Sciatic nerve (tissue), 2 donors: ENCODE measurements at regions of chr1 and their contacts with region 1.

Region 1: GRCh38 chr1:85307987-85308832 is 31.8 kb upstream of the BCL10 start:
- DNase-seq: peak; percentile 92
- ATAC-seq: peak; percentile 97

Region 2: DNA sequence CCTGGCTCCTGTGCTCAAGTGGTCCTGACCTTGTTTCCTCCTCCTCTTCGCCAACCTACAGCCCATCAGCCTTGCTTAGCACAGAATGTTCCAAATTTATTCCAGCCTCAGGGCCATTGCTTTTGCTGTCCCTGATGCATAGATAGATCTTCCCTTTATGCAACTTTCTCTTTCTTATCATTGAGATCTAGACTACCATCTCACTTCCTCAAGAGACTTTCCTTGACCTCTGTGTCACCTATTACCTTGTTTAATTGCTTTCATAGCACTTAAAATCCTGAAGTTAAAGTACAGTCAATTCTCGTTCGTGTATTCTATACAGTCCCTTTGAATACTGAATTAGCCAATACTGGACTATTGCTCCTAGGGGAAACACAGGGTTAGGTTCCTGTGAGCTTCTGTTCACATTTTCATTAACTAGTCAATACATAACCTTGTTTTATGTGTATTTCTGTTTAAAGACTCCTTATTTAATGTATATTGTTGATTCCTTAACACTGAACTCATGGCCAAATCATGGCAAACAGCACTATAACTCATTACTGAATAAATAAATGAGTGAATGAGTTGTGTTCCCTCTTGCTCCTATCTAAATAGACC is 233.7 kb before region 1 on chr1:
- intact Hi-C with region 1: no loop called
- DNase-seq: no peak
- ATAC-seq: no peak

Region 3: DNA sequence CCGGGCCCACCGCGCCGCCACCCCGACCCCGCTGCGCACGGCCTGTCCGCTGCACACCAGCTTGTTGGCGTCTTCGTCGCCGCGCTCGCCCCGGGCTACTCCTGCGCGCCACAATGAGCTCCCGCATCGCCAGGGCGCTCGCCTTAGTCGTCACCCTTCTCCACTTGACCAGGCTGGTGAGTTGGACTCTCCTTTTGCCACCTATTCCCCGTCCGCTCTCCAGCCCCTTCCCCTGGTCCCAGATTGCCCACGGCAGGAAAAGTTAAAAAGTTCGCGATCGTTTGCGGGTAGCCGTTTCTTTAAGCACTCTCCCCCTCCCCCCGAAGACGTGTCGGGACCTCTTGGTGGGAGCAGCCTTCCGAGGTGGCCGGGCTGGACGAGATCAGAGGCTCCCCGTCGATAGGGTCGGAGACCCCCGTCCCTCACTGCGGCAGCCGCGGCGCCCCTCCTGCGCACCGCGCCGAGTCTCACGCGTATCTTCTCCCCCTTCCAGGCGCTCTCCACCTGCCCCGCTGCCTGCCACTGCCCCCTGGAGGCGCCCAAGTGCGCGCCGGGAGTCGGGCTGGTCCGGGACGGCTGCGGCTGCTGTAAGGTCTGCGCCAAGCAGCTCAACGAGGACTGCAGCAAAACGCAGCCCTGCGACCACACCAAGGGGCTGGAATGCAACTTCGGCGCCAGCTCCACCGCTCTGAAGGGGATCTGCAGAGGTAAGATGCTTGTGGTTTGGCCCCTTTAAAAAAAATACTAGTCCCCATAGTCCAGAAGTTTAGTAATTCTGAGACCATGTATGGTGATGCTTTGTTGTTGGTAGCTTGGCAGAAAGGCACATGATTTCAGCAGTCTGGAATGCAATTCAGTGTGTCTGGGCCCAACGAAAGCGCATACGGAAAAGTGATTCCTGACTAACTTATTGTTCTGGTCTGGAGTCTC is 272.9 kb after region 1 on chr1:
- intact Hi-C with region 1: loop called (anchors 10 kb)
- DNase-seq: peak; percentile 87
- ATAC-seq: peak; percentile 60

Region 4: DNA sequence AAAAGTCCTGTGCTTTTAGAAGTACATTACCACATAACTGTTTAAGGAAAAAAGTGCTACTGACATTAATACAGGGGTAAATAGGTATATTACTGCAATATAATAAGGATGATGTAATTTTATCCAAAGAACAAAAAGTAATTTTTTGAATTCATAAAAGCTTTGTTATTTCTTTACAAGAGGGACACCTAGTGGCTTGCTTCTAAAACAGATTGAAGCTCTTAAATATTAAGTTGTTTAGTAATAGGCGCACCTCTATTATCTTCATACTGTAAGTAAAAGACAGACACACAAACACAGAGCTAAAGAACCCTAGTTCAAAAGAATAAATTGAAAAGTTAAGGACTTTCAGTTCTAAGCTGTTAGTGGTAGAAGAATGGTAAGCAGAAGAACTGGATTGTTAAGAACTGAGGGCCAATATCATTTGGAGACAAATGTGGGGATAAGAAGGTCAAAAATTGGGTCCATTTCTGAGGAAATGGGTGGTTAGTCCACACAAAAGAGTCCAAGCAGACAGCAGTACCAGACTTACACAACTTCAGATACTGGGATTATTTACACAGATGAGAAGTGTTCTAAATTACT is 384.6 kb after region 1 on chr1:
- intact Hi-C with region 1: loop called (anchors 2 kb)
- DNase-seq: no peak
- ATAC-seq: peak; percentile 52